ENCODE measurements at regions of chr7 and their contacts with region 1.

Region 1: DNA sequence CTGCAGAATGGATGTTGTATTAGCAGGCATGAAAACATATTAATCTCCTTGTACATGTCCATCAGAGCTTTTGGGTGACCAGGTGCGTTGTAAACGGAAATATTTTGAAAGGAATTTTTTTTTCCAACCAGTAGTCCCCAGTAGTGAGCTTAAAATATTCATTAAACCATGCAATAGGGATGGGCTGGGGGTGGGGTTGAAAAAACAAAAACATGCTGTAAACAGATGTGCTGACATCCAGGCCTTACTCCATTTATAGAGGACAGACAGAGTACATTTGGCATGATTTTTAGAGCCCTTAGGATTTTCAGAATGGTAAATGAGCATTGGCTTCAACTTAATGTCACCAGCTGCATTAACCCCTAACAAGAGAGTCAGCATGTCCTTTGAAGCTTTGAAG is 50.2 kb downstream of the PTPN12 start:
- DNase-seq: no peak
- ATAC-seq: no peak

Region 2: DNA sequence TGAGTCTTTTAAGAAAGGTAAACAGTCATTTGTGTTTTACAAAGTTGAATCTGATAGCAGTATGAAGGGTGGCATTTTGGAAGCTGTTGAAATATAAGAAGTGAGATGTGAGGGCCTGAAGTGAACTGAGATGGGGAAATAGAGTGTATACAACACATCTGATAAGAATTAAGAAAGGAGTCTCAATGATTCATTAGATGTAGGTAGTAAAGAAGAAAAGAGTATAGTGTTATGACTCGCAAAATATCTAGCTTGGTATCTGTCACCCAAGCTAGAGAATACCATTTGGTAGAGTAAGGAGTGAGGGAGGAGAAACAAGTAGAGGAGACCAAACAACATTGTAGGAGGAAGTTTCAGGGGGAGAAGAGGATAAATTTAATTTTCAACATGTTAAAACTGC is 44.9 kb before region 1 on chr7:
- intact Hi-C with region 1: loop called (anchors 10 kb)
- DNase-seq: no peak
- ATAC-seq: no peak

Region 3: GRCh38 chr7:78006063-78006755 is 418.9 kb after region 1 on chr7:
- intact Hi-C with region 1: no loop called
- DNase-seq: no peak
- ATAC-seq: no peak

Measured in Right ventricle myocardium superior (tissue), 1 donor.